GM18951 (cell line): ENCODE measurements at regions of chr22 and their contacts with region 1.

Region 1: GRCh38 chr22:28019881-28020871 is 101.1 kb upstream of the PITPNB start:
- POLR2A ChIP-seq: no peak

Region 2: DNA sequence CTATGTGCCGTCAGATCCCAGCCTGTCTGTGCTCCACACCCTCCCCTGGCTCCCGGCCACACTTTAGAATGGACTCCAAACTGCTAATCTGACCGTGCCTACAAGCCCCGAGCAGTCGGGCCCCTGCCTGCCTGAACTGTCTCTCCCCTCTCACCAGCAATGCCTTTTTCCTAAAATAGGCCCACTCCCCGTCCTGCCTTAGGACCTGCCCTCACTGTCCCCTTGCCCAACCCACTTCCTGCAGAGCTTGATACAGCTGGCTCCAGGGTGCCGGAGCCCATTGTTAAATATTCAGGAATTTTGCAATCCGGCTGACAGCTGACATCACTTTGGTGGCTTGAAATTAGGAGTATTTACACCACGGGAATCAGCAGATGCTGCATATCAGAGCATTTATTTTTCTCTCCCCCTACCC is 240.0 kb before region 1 on chr22:
- in situ Hi-C with region 1: no loop called
- POLR2A ChIP-seq: no peak

Region 3: DNA sequence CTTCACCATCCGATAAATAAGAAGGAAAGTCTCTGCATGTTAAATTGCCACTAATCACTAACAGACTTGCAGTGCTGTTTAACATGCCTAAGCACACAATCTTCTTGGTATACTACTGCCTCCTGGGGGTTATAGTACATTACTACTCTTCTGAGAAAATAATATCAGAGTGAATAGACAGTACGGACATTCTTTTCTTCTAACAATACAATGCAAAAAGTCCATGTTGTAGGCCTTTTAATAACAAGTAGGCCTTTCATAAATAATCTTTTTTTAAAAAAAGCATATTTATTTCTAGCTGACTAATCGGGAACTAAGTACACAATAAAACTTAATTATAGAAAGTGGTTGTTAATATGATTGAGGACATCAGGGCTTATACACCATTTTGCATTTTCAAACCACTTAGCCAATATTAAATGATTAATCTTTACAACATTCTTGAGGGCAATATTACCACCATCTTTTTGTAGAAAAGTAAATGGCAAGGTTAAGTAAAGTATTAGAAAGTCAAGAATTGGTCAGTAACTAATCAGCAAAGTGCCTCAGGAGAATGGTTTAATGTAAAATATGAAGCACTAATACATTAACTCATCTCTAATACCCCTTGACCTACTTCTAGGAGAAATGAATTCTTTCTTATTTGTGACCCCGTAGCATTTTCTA is 574.8 kb after region 1 on chr22:
- in situ Hi-C with region 1: loop called (anchors 10 kb)
- POLR2A ChIP-seq: no peak